Activated T-helper 2 cell treated with anti-CD3 and anti-CD28 coated beads, Interferon-gamma antibody, Interleukin-2, Interleukin-4, amounts not matched to agents 10 μg/mL and 5 μg/mL and 100 μg/mL, durations not matched to agents 14 hours and 24 hours and 36 hours (primary cell): ENCODE measurements at regions of chr7 and their contacts with region 1.

Region 1: GRCh38 chr7:130912862-130913631 is 179.0 kb upstream of the KLF14 start:
- DNase-seq: peak; percentile 80
- H3K4me3 Mint-ChIP-seq: peak overlapping the region; percentile 86
- H3K27ac Mint-ChIP-seq: peak overlapping the region; percentile 86
- H3K4me1 Mint-ChIP-seq: peaks cover 78% of the 10 kb centered on the region
- H3K27me3 Mint-ChIP-seq: no peaks in the 10 kb centered on the region

Region 2: DNA sequence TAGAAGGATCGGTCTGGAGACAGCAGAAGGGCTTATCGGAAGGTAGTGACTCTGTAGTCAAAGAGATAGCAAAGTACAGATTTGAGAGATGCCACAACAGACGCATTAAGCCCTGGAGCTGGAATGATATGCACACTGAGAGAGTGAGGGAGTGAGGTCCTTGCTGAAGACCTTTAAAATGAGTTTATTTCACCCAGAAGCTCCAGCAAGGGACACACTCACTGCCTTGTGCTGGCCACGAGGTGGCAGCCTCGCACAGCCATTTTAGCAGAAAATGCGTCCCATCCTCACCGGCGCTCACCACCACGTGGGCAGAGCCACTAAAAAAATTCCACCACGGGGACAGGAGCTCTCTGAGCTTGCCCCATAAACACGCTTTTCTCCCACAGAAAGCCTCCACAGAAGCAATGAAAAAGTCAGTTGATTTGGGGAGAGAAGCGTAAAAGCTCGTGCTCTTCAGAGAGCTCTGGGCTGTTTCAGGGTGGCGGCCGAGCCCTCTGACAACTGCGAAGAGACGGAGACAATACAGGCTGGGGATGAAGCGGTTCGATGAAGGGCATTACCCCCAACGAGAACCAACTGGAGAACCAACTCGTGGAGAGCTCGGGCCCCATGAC is 16.0 kb before region 1 on chr7:
- intact Hi-C with region 1: loop called (anchors 1 kb)
- DNase-seq: peak; percentile 62
- H3K4me3 Mint-ChIP-seq: peak overlapping the region; percentile 26
- H3K27ac Mint-ChIP-seq: peak overlapping the region; percentile 86
- H3K4me1 Mint-ChIP-seq: peaks cover 73% of the 10 kb centered on the region
- H3K27me3 Mint-ChIP-seq: no peaks in the 10 kb centered on the region

Region 3: GRCh38 chr7:130943336-130943901 is 30.4 kb after region 1 on chr7:
- intact Hi-C with region 1: loop called (anchors 1 kb)
- DNase-seq: no peak
- H3K4me3 Mint-ChIP-seq: peak overlapping the region; percentile 68
- H3K27ac Mint-ChIP-seq: peak overlapping the region; percentile 70
- H3K4me1 Mint-ChIP-seq: peaks cover 85% of the 10 kb centered on the region
- H3K27me3 Mint-ChIP-seq: no peaks in the 10 kb centered on the region

Region 4: GRCh38 chr7:130970696-130971095 is 57.6 kb after region 1 on chr7:
- intact Hi-C with region 1: loop called (anchors 1 kb)
- DNase-seq: no peak
- H3K4me3 Mint-ChIP-seq: peak overlapping the region; percentile 44
- H3K27ac Mint-ChIP-seq: peak overlapping the region; percentile 94
- H3K4me1 Mint-ChIP-seq: peaks cover 70% of the 10 kb centered on the region
- H3K27me3 Mint-ChIP-seq: no peaks in the 10 kb centered on the region

Region 5: GRCh38 chr7:131007394-131008330 is 94.6 kb after region 1 on chr7:
- intact Hi-C with region 1: loop called (anchors 1 kb)
- DNase-seq: peak; percentile 57
- H3K4me3 Mint-ChIP-seq: peak overlapping the region; percentile 67
- H3K27ac Mint-ChIP-seq: peak overlapping the region; percentile 95
- H3K4me1 Mint-ChIP-seq: peaks cover 61% of the 10 kb centered on the region
- H3K27me3 Mint-ChIP-seq: no peaks in the 10 kb centered on the region

Region 6: GRCh38 chr7:131107337-131108211 is 194.5 kb after region 1 on chr7:
- intact Hi-C with region 1: loop called (anchors 2 kb)
- DNase-seq: peak; percentile 75
- H3K4me3 Mint-ChIP-seq: peak overlapping the region; percentile 98
- H3K27ac Mint-ChIP-seq: peak overlapping the region; percentile 97
- H3K4me1 Mint-ChIP-seq: peaks cover 54% of the 10 kb centered on the region
- H3K27me3 Mint-ChIP-seq: no peaks in the 10 kb centered on the region

Region 7: GRCh38 chr7:131231381-131232220 is 318.6 kb after region 1 on chr7:
- intact Hi-C with region 1: loop called (anchors 5 kb)
- DNase-seq: peak; percentile 63
- H3K4me3 Mint-ChIP-seq: peak overlapping the region; percentile 59
- H3K27ac Mint-ChIP-seq: peak overlapping the region; percentile 83
- H3K4me1 Mint-ChIP-seq: peaks cover 58% of the 10 kb centered on the region
- H3K27me3 Mint-ChIP-seq: no peaks in the 10 kb centered on the region